PC-3 (cell line): ENCODE measurements at regions of chr6 and their contacts with region 1.

Region 1: GRCh38 chr6:22954749-22955385 is 385.5 kb downstream of the HDGFL1 start:
- DNase-seq: peak; percentile 43
- ATAC-seq: peak; percentile 71
- H3K4me3 ChIP-seq: peak overlapping the region; percentile 62
- H3K27ac ChIP-seq: no peak overlapping the region
- H3K4me1 ChIP-seq: no peaks in the 10 kb centered on the region; the same call in 1 of the 2 replicates
- H3K27me3 ChIP-seq: no peaks in the 10 kb centered on the region
- CTCF ChIP-seq: no peak

Region 2: DNA sequence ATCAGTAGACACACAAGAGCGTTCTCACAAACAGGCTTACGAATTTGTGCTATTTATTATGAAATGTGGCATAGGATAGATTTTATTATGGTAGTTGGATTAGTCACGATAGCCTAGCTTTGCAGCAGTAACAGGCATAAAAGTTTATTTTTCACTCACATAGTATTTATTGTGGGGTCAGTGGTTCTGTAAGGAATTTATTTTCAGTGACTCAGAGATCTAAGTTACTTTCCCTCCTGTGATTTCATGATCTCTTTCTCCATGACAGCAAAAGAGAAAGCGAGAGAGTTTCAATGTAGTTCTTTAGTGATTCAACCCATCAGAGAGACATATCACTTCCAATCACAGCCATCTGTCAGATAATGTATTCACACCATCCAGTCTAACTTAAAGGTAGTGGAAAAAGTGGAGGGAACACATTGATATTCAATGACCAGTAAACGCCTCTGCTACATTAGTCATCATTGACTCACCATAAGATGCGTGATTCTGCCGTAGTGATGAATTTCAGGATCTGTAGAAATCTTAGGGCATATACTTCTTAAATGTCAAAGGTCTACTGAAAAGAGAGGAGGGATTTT is 220.0 kb after region 1 on chr6:
- CTCF ChIA-PET with region 1: no interaction called
- POLR2A ChIA-PET with region 1: no interaction called
- intact Hi-C with region 1: loop called (anchors 10 kb)
- DNase-seq: peak; percentile 95
- ATAC-seq: peak; percentile 86
- H3K4me3 ChIP-seq: peak overlapping the region; percentile 36; the same call in 1 of the 2 replicates
- H3K27ac ChIP-seq: peak overlapping the region; percentile 95
- H3K4me1 ChIP-seq: peaks cover 31% of the 10 kb centered on the region
- H3K27me3 ChIP-seq: no peaks in the 10 kb centered on the region
- CTCF ChIP-seq: no peak